Activated CD4-positive, alpha-beta T cell treated with anti-CD3 and anti-CD28 coated beads for 36 hours (primary cell): ENCODE measurements at regions of chrX and their contacts with region 1.

Region 1: DNA sequence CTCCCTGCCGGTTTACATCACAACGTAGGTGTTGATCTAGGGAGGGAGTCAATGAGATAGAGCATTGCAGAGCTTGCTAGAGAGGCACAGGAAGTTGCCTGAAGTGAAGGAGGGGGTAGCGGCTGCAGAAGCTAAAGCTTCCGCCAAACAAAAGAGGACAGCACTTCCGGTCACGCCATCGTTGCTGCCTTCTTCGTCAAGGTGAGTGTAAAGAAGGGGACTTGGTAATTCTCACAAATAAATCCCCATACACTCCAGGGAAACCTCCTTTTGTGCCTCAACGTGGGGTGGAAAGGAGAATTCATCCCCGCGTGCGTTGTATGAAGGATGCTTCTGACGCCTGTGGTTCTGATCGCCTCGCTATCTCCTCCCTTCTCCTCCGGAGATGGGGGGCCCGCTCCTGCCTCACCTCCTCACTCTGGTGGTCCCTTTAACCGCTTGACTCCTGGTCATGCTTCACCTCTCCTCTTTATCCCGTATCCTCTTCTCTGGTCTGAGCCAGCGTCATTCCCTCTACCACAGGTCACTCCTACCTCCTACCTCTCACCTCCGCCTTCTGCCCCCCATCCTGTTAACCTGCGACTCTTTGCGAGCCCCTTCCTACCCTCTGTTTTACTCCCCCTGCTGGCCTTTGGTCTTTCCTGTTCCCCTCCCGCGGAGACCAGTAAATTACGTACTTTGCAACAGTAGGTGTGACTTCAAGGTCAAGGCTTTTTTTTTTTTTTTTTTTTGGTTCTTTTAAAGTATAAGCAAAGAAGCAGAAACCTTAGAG is 59.9 kb downstream of the GSPT2 start:
- DNase-seq: peak; percentile 72
- ATAC-seq: peak; percentile 93
- H3K4me3 Mint-ChIP-seq: peak overlapping the region; percentile 100
- H3K27ac Mint-ChIP-seq: peak overlapping the region; percentile 98
- H3K4me1 Mint-ChIP-seq: peaks cover 21% of the 10 kb centered on the region
- H3K27me3 Mint-ChIP-seq: no peaks in the 10 kb centered on the region

Region 2: GRCh38 chrX:51641421-51642021 is 161.6 kb before region 1 on chrX:
- CTCF ChIA-PET with region 1: interaction called, 3 read pairs
- POLR2A ChIA-PET with region 1: no interaction called
- intact Hi-C with region 1: loop called in 1 of 2 experiments (anchors 1 kb)
- DNase-seq: peak; percentile 10
- ATAC-seq: no peak
- H3K4me3 Mint-ChIP-seq: no peak overlapping the region
- H3K27ac Mint-ChIP-seq: no peak overlapping the region
- H3K4me1 Mint-ChIP-seq: no peaks in the 10 kb centered on the region
- H3K27me3 Mint-ChIP-seq: peaks cover 22% of the 10 kb centered on the region

Region 3: GRCh38 chrX:51743179-51743957 is 59.7 kb before region 1 on chrX and contains the start of gene GSPT2:
- CTCF ChIA-PET with region 1: no interaction called
- POLR2A ChIA-PET with region 1: no interaction called
- intact Hi-C with region 1: loop called (anchors 1 kb)
- DNase-seq: peak; percentile 83
- ATAC-seq: peak; percentile 97
- H3K4me3 Mint-ChIP-seq: peak within 1 kb of the TSS; percentile 85
- H3K27ac Mint-ChIP-seq: peak within 1 kb of the TSS; percentile 86
- H3K4me1 Mint-ChIP-seq: peaks cover 22% of the 10 kb centered on the region
- H3K27me3 Mint-ChIP-seq: no peaks in the 10 kb centered on the region
- total RNA-seq, gene GSPT2: 11.2 to 11.6 TPM

Region 4: GRCh38 chrX:51892921-51893745 is 90.0 kb after region 1 on chrX and contains the start of gene MAGED1:
- CTCF ChIA-PET with region 1: no interaction called
- POLR2A ChIA-PET with region 1: no interaction called
- intact Hi-C with region 1: loop called in 1 of 2 experiments (anchors 2 kb)
- DNase-seq: peak; percentile 90
- ATAC-seq: peak; percentile 97
- H3K4me3 Mint-ChIP-seq: peak within 1 kb of the TSS; percentile 92
- H3K27ac Mint-ChIP-seq: peak within 1 kb of the TSS; percentile 83
- H3K4me1 Mint-ChIP-seq: peaks cover 19% of the 10 kb centered on the region
- H3K27me3 Mint-ChIP-seq: no peaks in the 10 kb centered on the region
- total RNA-seq, gene MAGED1: 46.8 to 55.4 TPM